ENCODE measurements at regions of chr11 and their contacts with region 1.

Region 1: GRCh38 chr11:83819933-83820549 is 533.9 kb upstream of the CCDC90B start:
- DNase-seq: peak; percentile 29
- H3K4me3 ChIP-seq: no peak overlapping the region
- H3K27ac ChIP-seq: no peak overlapping the region
- H3K4me1 ChIP-seq: peaks cover 2 to 30% of the 10 kb centered on the region in 2 experiments; a peak in 3 of 4 replicates
- H3K27me3 ChIP-seq: no peaks in the 10 kb centered on the region
- CTCF ChIP-seq: peak; percentile 80
- EP300 ChIP-seq: no peak
- RAD21 ChIP-seq: peak; percentile 95

Region 2: DNA sequence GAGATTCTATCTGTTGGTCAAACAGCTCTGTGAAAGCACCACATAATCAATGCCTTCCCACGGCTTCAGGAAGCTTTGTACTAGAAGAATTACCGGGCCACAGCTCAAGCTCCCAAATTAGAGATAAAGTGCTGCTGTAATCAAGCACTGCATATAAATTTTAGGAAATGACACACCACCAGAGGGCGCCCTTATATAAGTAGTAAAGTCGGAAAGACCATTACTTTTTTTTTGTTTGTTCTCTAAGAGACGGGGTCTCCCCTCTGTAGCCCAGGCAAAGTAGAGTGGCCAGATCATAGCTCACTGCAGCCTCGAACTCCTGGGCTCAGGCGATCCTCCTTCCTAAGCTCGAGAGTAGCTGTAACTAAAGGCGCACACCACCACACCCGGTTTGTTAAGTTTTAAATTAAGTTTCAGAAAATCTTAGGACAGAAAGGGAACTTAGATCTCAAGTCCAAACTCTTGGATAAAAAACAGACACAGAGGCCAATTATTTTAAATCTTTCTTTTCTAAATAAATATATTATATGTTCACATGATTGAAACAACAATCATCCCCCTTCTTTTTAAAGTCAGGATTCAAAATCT is 952.5 kb before region 1 on chr11:
- CTCF ChIA-PET with region 1: interaction called, 45 read pairs
- POLR2A ChIA-PET with region 1: no interaction called
- DNase-seq: peak; percentile 62
- H3K4me3 ChIP-seq: no peak overlapping the region; a peak in 1 of 4 replicates
- H3K27ac ChIP-seq: no peak overlapping the region
- H3K4me1 ChIP-seq: peaks cover 0 to 7% of the 10 kb centered on the region in 2 experiments; a peak in 1 of 4 replicates
- H3K27me3 ChIP-seq: no peaks in the 10 kb centered on the region
- CTCF ChIP-seq: peak; percentile 78
- EP300 ChIP-seq: no peak
- RAD21 ChIP-seq: peak; percentile 82

Region 3: DNA sequence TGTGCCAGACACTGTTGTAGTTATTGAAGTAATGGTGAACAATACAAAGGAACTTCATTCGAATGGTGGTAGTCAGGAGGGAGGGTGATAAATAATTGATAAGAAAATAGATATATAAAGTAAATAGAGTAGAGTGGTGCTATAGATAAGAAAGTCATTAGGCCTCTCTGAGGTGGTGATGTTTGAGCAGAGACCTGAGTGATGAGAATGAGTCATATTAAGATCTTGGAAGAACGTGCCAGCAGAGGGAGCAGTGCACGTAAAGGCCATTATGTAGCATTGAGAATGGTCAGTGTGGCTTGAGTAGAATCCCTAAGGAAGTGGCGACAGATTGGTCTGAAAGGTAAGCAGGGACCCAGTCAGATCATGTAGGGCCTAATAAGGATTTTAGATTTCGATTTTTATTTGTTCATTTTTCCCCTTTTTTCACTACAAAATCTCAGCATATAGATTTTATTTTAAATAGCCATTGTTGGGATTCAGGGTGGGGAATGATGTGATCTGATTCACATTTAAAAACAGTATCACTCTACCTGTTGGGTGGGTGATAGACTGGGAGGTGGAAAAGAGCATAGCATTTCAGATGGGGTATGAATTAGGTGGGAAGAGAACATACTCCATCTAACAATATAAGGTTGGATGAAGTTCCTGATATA is 578.6 kb before region 1 on chr11:
- CTCF ChIA-PET with region 1: interaction called, 12 read pairs
- POLR2A ChIA-PET with region 1: no interaction called
- DNase-seq: peak; percentile 38
- H3K4me3 ChIP-seq: no peak overlapping the region; a peak in 1 of 4 replicates
- H3K27ac ChIP-seq: no peak overlapping the region
- H3K4me1 ChIP-seq: no peaks in the 10 kb centered on the region; a peak in 1 of 4 replicates
- H3K27me3 ChIP-seq: no peaks in the 10 kb centered on the region
- CTCF ChIP-seq: peak; percentile 69
- EP300 ChIP-seq: no peak
- RAD21 ChIP-seq: peak; percentile 57

Region 4: GRCh38 chr11:83285151-83285770 is 534.8 kb before region 1 on chr11:
- CTCF ChIA-PET with region 1: interaction called, 171 read pairs
- POLR2A ChIA-PET with region 1: interaction called, 4 read pairs
- DNase-seq: no peak
- H3K4me3 ChIP-seq: peak overlapping the region; percentile 83 to 89
- H3K27ac ChIP-seq: peak overlapping the region; percentile 94 to 98
- H3K4me1 ChIP-seq: peaks cover 22 to 37% of the 10 kb centered on the region in 2 experiments; a peak in 3 of 4 replicates
- H3K27me3 ChIP-seq: no peaks in the 10 kb centered on the region
- CTCF ChIP-seq: no peak
- EP300 ChIP-seq: no peak
- RAD21 ChIP-seq: no peak

Region 5: GRCh38 chr11:83508804-83509203 is 311.2 kb before region 1 on chr11:
- CTCF ChIA-PET with region 1: interaction called, 12 read pairs
- POLR2A ChIA-PET with region 1: no interaction called
- DNase-seq: no peak
- H3K4me3 ChIP-seq: no peak overlapping the region
- H3K27ac ChIP-seq: no peak overlapping the region
- H3K4me1 ChIP-seq: no peaks in the 10 kb centered on the region
- H3K27me3 ChIP-seq: no peaks in the 10 kb centered on the region
- CTCF ChIP-seq: no peak
- EP300 ChIP-seq: no peak
- RAD21 ChIP-seq: no peak

Region 6: GRCh38 chr11:83801780-83802179 is 18.3 kb before region 1 on chr11:
- CTCF ChIA-PET with region 1: interaction called, 19 read pairs
- POLR2A ChIA-PET with region 1: no interaction called
- DNase-seq: no peak
- H3K4me3 ChIP-seq: no peak overlapping the region
- H3K27ac ChIP-seq: no peak overlapping the region
- H3K4me1 ChIP-seq: no peaks in the 10 kb centered on the region
- H3K27me3 ChIP-seq: no peaks in the 10 kb centered on the region
- CTCF ChIP-seq: peak; percentile 32; the same call in 1 of the 2 replicates
- EP300 ChIP-seq: no peak
- RAD21 ChIP-seq: no peak